PC-9 (cell line): ENCODE measurements at regions of chr5 and their contacts with region 1.

Region 1: GRCh38 chr5:154761046-154761736 is 6.0 kb downstream of the LARP1 start:
- DNase-seq: no peak
- H3K4me3 ChIP-seq: no peak overlapping the region
- H3K27ac ChIP-seq: peak overlapping the region; percentile 24; the same call in 1 of the 2 replicates
- H3K4me1 ChIP-seq: peaks cover 40% of the 10 kb centered on the region
- H3K27me3 ChIP-seq: no peaks in the 10 kb centered on the region
- CTCF ChIP-seq: no peak

Region 2: DNA sequence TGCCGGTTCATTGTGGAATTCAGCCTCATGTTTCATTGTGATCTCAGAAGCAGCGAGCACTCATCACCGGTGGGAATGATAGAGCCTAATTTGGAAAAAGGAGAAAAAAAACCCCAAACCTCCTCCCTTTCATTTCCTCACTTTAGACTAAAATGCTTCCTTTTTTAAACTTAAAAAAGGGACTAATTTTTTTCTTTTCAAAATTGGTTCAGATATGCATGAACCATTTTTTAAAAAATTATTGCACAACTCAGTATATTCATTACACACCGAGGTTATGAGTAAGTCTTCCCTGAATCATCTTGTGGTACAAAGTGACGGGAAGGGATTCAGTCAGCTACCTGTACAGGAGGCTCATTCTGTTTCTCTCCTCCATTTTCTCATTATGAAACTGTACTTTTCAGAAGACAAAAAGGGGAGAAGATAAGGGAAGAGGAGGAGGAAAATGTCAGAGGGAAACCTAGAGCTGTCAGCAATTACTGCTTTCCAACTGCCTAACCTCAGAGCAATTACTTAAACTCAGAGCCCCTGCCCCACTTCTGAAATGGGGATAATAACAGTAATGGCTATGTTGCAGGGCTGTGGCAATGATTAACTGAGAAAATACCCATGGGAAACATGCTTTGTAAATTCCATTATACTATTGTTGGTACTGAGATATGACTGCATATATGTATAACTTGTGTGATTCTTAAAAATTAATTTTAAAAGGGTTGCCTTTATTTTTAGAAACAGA is 546.7 kb before region 1 on chr5:
- CTCF ChIA-PET with region 1: no interaction called
- POLR2A ChIA-PET with region 1: interaction called, 15 read pairs
- intact Hi-C with region 1: no loop called
- DNase-seq: peak in 1 of 2 experiments; percentile 83
- H3K4me3 ChIP-seq: no peak overlapping the region
- H3K27ac ChIP-seq: peak overlapping the region; percentile 79
- H3K4me1 ChIP-seq: peaks cover 74% of the 10 kb centered on the region
- H3K27me3 ChIP-seq: no peaks in the 10 kb centered on the region
- CTCF ChIP-seq: no peak

Region 3: GRCh38 chr5:154663424-154663823 is 97.8 kb before region 1 on chr5:
- CTCF ChIA-PET with region 1: no interaction called
- POLR2A ChIA-PET with region 1: interaction called, 28 read pairs
- intact Hi-C with region 1: no loop called
- DNase-seq: no peak
- H3K4me3 ChIP-seq: no peak overlapping the region
- H3K27ac ChIP-seq: no peak overlapping the region
- H3K4me1 ChIP-seq: no peaks in the 10 kb centered on the region
- H3K27me3 ChIP-seq: no peaks in the 10 kb centered on the region
- CTCF ChIP-seq: no peak

Region 4: GRCh38 chr5:154737667-154738320 is 23.4 kb before region 1 on chr5:
- CTCF ChIA-PET with region 1: no interaction called
- POLR2A ChIA-PET with region 1: no interaction called
- intact Hi-C with region 1: no loop called
- DNase-seq: no peak
- H3K4me3 ChIP-seq: no peak overlapping the region
- H3K27ac ChIP-seq: no peak overlapping the region
- H3K4me1 ChIP-seq: no peaks in the 10 kb centered on the region
- H3K27me3 ChIP-seq: no peaks in the 10 kb centered on the region
- CTCF ChIP-seq: no peak

Region 5: GRCh38 chr5:154940772-154941620 is 179.8 kb after region 1 on chr5 and contains the start of gene MRPL22:
- CTCF ChIA-PET with region 1: no interaction called
- POLR2A ChIA-PET with region 1: no interaction called
- intact Hi-C with region 1: loop called (anchors 5 kb)
- DNase-seq: peak; percentile 86 to 92
- H3K4me3 ChIP-seq: peak within 1 kb of the TSS; percentile 81
- H3K27ac ChIP-seq: peak within 1 kb of the TSS; percentile 35
- H3K4me1 ChIP-seq: peaks cover 26% of the 10 kb centered on the region; the same call in 1 of the 2 replicates
- H3K27me3 ChIP-seq: no peaks in the 10 kb centered on the region
- CTCF ChIP-seq: no peak
- total RNA-seq, gene MRPL22: 80.8 and 94.0 TPM in 2 replicates